Activated T-helper 2 cell treated with anti-CD3 and anti-CD28 coated beads, Interferon-gamma antibody, Interleukin-2, Interleukin-4, amounts not matched to agents 10 μg/mL and 5 μg/mL and 100 μg/mL, durations not matched to agents 14 hours and 24 hours and 36 hours (primary cell): ENCODE measurements at regions of chr11 and their contacts with region 1.

Region 1: DNA sequence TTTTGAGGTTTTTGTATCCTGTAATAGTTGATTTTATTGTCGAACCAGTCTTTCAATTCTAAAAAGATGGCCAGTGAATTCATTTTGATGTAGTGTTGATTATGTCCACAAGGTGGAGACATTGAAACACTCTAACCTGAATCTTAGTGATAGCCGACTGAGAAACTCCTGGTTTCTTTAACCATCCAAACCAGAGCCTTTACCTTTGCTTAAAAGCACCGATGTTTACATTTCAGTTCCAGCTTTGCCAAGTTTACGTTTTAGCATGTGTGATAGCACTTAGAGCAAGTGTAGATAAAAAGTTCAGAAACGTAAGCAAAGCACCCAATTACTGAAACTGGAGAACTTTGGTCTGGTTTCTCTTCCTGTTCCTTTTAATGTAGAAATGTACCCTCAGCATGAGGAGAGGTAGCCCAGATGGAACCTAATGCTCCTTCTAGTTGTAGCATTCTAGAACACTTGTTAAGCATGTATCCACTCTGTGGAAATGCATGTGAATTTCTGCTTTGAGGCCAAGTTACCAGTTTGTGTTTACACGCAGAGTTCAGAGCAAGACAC is 208.6 kb downstream of the DBX1 start:
- DNase-seq: no peak
- H3K4me3 Mint-ChIP-seq: peak overlapping the region; percentile 24
- H3K27ac Mint-ChIP-seq: no peak overlapping the region
- H3K4me1 Mint-ChIP-seq: peaks cover 7% of the 10 kb centered on the region
- H3K27me3 Mint-ChIP-seq: peaks cover 17% of the 10 kb centered on the region

Region 2: GRCh38 chr11:19808076-19808911 is 143.3 kb before region 1 on chr11:
- intact Hi-C with region 1: no loop called
- DNase-seq: no peak
- H3K4me3 Mint-ChIP-seq: no peak overlapping the region
- H3K27ac Mint-ChIP-seq: no peak overlapping the region
- H3K4me1 Mint-ChIP-seq: no peaks in the 10 kb centered on the region
- H3K27me3 Mint-ChIP-seq: peaks cover 2% of the 10 kb centered on the region

Region 3: GRCh38 chr11:20110908-20111669 is 159.5 kb after region 1 on chr11:
- intact Hi-C with region 1: loop called (anchors 1 kb)
- DNase-seq: peak; percentile 21
- H3K4me3 Mint-ChIP-seq: no peak overlapping the region
- H3K27ac Mint-ChIP-seq: no peak overlapping the region
- H3K4me1 Mint-ChIP-seq: no peaks in the 10 kb centered on the region
- H3K27me3 Mint-ChIP-seq: no peaks in the 10 kb centered on the region